ENCODE measurements at regions of chr12 and their contacts with region 1.

Region 1: DNA sequence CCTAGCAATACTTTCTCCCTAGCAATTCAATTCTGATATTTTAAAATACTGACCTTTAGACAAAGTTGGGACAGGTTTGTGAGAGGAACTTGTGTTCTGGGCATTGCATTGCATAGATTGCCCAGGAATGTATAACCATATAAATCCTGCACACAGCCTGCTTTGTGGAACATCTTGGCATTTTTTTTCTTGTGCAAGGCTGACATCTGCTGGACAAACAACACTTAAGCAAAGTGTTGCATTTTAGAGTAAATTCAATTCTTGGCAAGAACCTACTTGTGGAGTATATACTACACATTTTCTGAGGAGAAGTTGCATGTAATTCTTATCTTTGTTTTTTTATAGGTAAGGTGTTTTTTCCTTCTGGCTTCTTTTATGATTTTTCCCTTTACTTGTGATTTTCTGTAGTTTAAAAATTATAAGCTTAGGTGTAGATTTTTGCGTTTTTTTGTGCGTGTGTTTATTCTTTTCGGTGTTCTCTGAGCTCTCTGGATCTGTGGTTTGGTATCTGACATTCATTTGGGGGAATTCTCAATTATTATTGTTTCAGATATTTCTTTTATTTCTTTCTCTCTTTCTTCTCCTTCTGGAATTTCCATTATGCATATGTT is 26.4 kb downstream of the TESPA1 start:
- DNase-seq: peak; percentile 67
- H3K4me3 ChIP-seq: no peak overlapping the region
- H3K27ac ChIP-seq: no peak overlapping the region
- H3K4me1 ChIP-seq: peaks cover 22% of the 10 kb centered on the region
- CTCF ChIP-seq: peak; percentile 93

Region 2: DNA sequence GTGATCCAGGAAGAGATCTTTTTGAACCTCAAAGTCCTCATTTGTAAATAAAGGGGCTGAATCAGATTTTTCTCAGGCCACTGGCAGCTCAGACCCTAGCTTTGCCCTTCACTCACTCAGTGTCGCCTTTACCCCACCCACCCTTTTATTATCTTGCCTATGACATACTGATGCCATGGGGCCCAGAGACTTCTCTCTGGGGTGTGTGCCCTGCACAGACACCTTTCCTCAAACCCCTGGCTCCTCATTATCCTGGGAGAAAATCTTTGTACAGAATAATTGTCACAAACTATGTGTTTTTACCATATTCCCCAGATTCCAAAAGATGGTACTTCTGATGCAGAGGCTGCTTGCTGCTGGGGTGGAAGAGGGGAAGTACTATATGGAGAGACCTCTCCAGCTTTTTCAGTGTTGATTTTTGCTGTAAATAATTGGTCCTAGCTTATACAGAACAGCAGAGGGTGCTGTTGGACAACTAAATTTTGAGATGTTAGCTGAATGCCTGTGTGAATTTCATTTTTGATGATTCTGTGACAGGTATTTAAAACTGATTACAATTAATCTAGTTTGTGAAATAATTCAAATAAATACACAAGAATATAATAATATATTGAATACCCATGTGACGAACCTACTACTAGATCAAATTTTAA is 256.1 kb before region 1 on chr12:
- CTCF ChIA-PET with region 1: no interaction called
- POLR2A ChIA-PET with region 1: no interaction called
- intact Hi-C with region 1: loop called (anchors 2 kb)
- DNase-seq: peak; percentile 62
- H3K4me3 ChIP-seq: no peak overlapping the region
- H3K27ac ChIP-seq: no peak overlapping the region
- H3K4me1 ChIP-seq: no peaks in the 10 kb centered on the region
- CTCF ChIP-seq: peak; percentile 89

Region 3: GRCh38 chr12:54853995-54854566 is 104.1 kb before region 1 on chr12 and contains the start of gene MUCL1:
- CTCF ChIA-PET with region 1: no interaction called
- POLR2A ChIA-PET with region 1: no interaction called
- intact Hi-C with region 1: loop called (anchors 1 kb)
- DNase-seq: peak; percentile 67
- H3K4me3 ChIP-seq: no peak within 1 kb of the TSS
- H3K27ac ChIP-seq: no peak within 1 kb of the TSS
- H3K4me1 ChIP-seq: no peaks in the 10 kb centered on the region
- CTCF ChIP-seq: peak; percentile 93
- total RNA-seq, gene MUCL1: not detected in 2 replicates

Measured in OCI-LY7 (cell line).